CD14-positive monocyte (primary cell): ENCODE measurements at regions of chr9 and their contacts with region 1.

Region 1: GRCh38 chr9:79583952-79584654 is 12.3 kb downstream of the TLE4 start:
- DNase-seq: peak; percentile 87 to 92 (median 87)
- H3K4me3 ChIP-seq: peak overlapping the region; percentile 4 to 55 (median 25)
- H3K4me3 Mint-ChIP-seq: peak overlapping the region; percentile 66 to 75
- H3K27ac ChIP-seq: peak overlapping the region; percentile 77 to 84
- H3K27ac Mint-ChIP-seq: peak overlapping the region; percentile 94 to 99 (median 98)
- H3K4me1 ChIP-seq: peaks cover 58 to 67% of the 10 kb centered on the region in 2 donors
- H3K4me1 Mint-ChIP-seq: peaks cover 73% of the 10 kb centered on the region
- H3K27me3 ChIP-seq: no peaks in the 10 kb centered on the region
- H3K27me3 Mint-ChIP-seq: peaks cover 0 to 1% (median 0%) of the 10 kb centered on the region in 3 donors
- CTCF ChIP-seq: no peak

Region 2: GRCh38 chr9:79542735-79543620 is 41.1 kb before region 1 on chr9:
- intact Hi-C with region 1: no loop called
- DNase-seq: no peak
- H3K4me3 ChIP-seq: no peak overlapping the region
- H3K4me3 Mint-ChIP-seq: no peak overlapping the region
- H3K27ac ChIP-seq: no peak overlapping the region
- H3K27ac Mint-ChIP-seq: no peak overlapping the region
- H3K4me1 ChIP-seq: no peaks in the 10 kb centered on the region
- H3K4me1 Mint-ChIP-seq: no peaks in the 10 kb centered on the region
- H3K27me3 ChIP-seq: no peaks in the 10 kb centered on the region
- H3K27me3 Mint-ChIP-seq: peaks cover 0 to 2% (median 0%) of the 10 kb centered on the region in 3 donors
- CTCF ChIP-seq: no peak

Region 3: GRCh38 chr9:79603222-79603920 is 19.3 kb after region 1 on chr9:
- intact Hi-C with region 1: no loop called
- DNase-seq: no peak
- H3K4me3 ChIP-seq: no peak overlapping the region
- H3K4me3 Mint-ChIP-seq: no peak overlapping the region
- H3K27ac ChIP-seq: peak overlapping the region in 1 of 2 donors; percentile 38
- H3K27ac Mint-ChIP-seq: no peak overlapping the region
- H3K4me1 ChIP-seq: peaks cover 17 to 26% of the 10 kb centered on the region in 2 donors
- H3K4me1 Mint-ChIP-seq: peaks cover 33% of the 10 kb centered on the region
- H3K27me3 ChIP-seq: no peaks in the 10 kb centered on the region
- H3K27me3 Mint-ChIP-seq: no peaks in the 10 kb centered on the region
- CTCF ChIP-seq: no peak

Region 4: GRCh38 chr9:79629721-79630120 is 45.6 kb after region 1 on chr9:
- intact Hi-C with region 1: loop called in 1 of 2 experiments (anchors 5 kb)
- DNase-seq: no peak
- H3K4me3 ChIP-seq: no peak overlapping the region
- H3K4me3 Mint-ChIP-seq: no peak overlapping the region
- H3K27ac ChIP-seq: no peak overlapping the region
- H3K27ac Mint-ChIP-seq: peak overlapping the region in 1 of 7 donors; percentile 23
- H3K4me1 ChIP-seq: peaks cover 20 to 39% of the 10 kb centered on the region in 2 donors
- H3K4me1 Mint-ChIP-seq: peaks cover 41% of the 10 kb centered on the region
- H3K27me3 ChIP-seq: no peaks in the 10 kb centered on the region
- H3K27me3 Mint-ChIP-seq: no peaks in the 10 kb centered on the region
- CTCF ChIP-seq: no peak